Sigmoid colon (tissue), 7 donors: ENCODE measurements at regions of chr5 and their contacts with region 1.

Region 1: DNA sequence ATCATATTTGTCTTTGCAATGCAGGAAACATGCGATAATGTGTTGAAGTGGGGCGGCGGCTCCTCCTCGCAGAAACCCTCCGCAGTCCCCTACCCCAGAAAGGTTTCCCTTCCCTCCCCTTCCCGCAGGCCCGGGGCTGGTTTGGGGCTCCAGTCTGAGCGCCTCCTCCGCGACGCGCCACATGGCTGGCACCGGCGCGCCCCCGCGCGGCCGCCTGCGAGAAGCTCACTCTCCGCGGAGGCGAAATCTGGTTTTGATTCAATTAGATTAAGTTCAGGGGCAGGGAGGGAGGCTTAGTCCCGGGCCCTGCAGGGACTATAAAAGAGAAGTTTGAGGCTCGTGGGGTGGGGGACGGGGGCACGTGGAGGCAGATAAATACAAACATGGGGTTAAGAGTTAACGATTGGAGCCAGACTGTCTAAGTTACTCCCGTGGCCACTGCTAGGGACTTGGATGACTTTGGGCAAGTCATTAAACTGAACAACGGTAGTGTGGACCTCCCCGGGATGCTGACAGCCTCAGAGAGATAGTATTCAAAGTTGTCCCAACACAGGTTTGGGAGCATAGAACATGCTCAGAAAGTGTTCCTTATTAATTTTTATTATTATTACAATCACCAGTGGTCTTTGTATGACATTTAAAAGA is 69.4 kb downstream of the MSX2 start:
- DNase-seq: peak; percentile 74
- H3K4me3 ChIP-seq: no peak overlapping the region
- H3K27ac ChIP-seq: no peak overlapping the region
- H3K4me1 ChIP-seq: peaks cover 0 to 8% (median 7%) of the 10 kb centered on the region in 4 donors
- H3K27me3 ChIP-seq: peaks cover 3 to 15% (median 3%) of the 10 kb centered on the region in 3 donors
- CTCF ChIP-seq: peak in 3 of 4 experiments; percentile 52 to 92 (median 79)
- EP300 ChIP-seq: no peak
- POLR2A ChIP-seq: no peak

Region 2: DNA sequence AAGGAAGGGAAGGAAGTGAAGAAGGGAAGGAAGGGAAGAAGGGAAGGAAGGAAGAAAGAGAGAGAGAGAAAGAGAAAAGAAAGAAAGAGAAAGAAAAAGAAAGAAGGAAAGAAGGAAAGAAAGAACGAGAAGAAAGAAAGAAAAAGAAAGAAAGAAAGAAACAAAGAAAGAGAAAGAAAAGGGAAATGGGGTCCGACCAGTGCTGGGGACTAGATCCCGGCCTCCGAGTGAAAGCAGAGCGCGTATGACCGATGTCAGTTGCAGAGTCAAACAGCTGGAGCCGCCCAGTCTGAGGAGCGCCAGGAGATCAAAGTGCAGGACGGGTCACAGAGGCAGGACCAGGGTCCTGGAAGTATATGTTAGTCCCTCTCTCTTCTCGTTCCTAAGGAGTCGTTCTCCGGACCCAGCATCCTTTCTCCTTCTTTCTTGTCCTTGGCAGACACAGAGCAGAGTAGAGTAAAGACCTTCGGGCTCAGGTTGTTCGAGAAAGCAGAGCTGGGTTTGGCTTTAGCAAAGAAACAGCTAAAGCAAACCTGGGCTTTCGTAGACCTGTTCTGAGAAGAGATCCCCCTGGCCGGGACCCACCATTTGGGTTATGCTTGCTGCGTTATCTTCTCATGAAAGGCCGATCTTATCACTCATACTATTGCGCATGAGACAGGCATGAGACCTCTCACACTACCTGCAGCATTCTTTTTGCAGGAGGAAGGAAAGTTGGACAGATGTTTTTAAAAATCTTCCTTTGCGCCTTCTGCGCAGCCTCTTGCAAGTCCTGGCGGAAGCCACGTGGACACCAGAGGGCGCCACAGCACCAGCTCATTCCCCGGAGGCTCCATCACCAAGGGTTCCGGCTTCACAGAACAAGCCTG is 374.6 kb before region 1 on chr5:
- intact Hi-C with region 1: loop called (anchors 1 kb)
- DNase-seq: peak; percentile 89
- H3K4me3 ChIP-seq: peak overlapping the region in 1 of 4 donors; percentile 10
- H3K27ac ChIP-seq: no peak overlapping the region
- H3K4me1 ChIP-seq: peaks cover 0 to 8% (median 6%) of the 10 kb centered on the region in 4 donors
- H3K27me3 ChIP-seq: peaks cover 0 to 34% (median 5%) of the 10 kb centered on the region in 3 donors
- CTCF ChIP-seq: peak; percentile 28 to 84 (median 68)
- EP300 ChIP-seq: no peak
- POLR2A ChIP-seq: no peak

Region 3: GRCh38 chr5:174571662-174572397 is 222.0 kb before region 1 on chr5:
- intact Hi-C with region 1: loop called (anchors 10 kb)
- DNase-seq: peak; percentile 81
- H3K4me3 ChIP-seq: no peak overlapping the region
- H3K27ac ChIP-seq: peak overlapping the region in 3 of 4 donors; percentile 48 to 51 (median 50)
- H3K4me1 ChIP-seq: peaks cover 0 to 14% (median 10%) of the 10 kb centered on the region in 4 donors
- H3K27me3 ChIP-seq: no peaks in the 10 kb centered on the region
- CTCF ChIP-seq: peak in 2 of 4 experiments; percentile 8 to 29
- EP300 ChIP-seq: no peak
- POLR2A ChIP-seq: no peak

Region 4: GRCh38 chr5:174688441-174689356 is 105.1 kb before region 1 on chr5:
- intact Hi-C with region 1: no loop called
- DNase-seq: no peak
- H3K4me3 ChIP-seq: no peak overlapping the region
- H3K27ac ChIP-seq: no peak overlapping the region
- H3K4me1 ChIP-seq: peaks cover 0 to 9% (median 4%) of the 10 kb centered on the region in 4 donors
- H3K27me3 ChIP-seq: peaks cover 12 to 71% (median 53%) of the 10 kb centered on the region in 3 donors
- CTCF ChIP-seq: no peak
- EP300 ChIP-seq: no peak
- POLR2A ChIP-seq: no peak